ENCODE measurements at regions of chr16 and their contacts with region 1.

Region 1: GRCh38 chr16:69132424-69133252 is at the starts of genes CHTF8 and UTP4:
- DNase-seq: peak; percentile 60 to 82
- H3K4me3 ChIP-seq: peak within 1 kb of the TSS; percentile 100
- H3K27ac ChIP-seq: peak within 1 kb of the TSS; percentile 56
- H3K4me1 ChIP-seq: peaks cover 26% of the 10 kb centered on the region
- H3K27me3 ChIP-seq: no peaks in the 10 kb centered on the region
- CTCF ChIP-seq: no peak
- total RNA-seq, gene CHTF8: 126 and 161 TPM in 2 replicates
- total RNA-seq, gene UTP4: 42.1 and 45.9 TPM in 2 replicates

Region 2: DNA sequence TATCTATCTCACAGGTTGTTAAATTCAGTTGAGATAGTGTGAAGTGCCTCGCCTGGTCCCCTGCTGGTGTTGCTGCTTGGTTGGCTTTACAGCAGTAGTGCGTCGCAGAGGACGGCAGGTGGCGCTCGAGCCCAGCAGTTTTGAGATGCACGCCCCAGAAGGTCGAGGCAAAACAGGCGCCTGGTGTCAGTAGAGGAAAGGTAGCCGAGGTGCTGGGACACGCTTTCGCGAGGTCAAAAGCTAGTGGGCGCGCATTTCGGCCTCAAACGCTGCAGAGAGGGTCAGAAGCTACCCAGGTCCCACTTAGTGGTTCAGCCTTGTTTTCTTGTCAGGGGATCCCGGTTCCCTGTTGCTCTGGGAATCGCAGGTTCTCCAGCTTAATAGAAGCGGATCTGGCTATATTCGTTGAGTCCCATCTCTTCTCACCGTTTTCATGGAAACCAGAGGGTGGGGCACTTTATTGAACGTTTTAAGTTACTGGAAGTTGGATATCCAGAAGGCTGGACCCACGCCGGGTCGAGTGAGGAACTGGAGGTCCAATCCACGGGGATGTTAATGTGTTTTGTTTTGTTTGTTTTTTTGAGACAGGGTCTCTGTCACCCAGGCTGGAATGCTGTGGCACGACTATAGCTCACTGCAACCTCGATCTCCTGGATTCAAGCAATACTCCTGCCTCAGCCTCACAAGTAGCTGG is 603.8 kb before region 1 on chr16:
- CTCF ChIA-PET with region 1: no interaction called
- POLR2A ChIA-PET with region 1: no interaction called
- intact Hi-C with region 1: loop called (anchors 2 kb)
- DNase-seq: peak; percentile 62 to 81
- H3K4me3 ChIP-seq: no peak overlapping the region
- H3K27ac ChIP-seq: no peak overlapping the region
- H3K4me1 ChIP-seq: peaks cover 10% of the 10 kb centered on the region
- H3K27me3 ChIP-seq: no peaks in the 10 kb centered on the region
- CTCF ChIP-seq: peak; percentile 88

Region 3: DNA sequence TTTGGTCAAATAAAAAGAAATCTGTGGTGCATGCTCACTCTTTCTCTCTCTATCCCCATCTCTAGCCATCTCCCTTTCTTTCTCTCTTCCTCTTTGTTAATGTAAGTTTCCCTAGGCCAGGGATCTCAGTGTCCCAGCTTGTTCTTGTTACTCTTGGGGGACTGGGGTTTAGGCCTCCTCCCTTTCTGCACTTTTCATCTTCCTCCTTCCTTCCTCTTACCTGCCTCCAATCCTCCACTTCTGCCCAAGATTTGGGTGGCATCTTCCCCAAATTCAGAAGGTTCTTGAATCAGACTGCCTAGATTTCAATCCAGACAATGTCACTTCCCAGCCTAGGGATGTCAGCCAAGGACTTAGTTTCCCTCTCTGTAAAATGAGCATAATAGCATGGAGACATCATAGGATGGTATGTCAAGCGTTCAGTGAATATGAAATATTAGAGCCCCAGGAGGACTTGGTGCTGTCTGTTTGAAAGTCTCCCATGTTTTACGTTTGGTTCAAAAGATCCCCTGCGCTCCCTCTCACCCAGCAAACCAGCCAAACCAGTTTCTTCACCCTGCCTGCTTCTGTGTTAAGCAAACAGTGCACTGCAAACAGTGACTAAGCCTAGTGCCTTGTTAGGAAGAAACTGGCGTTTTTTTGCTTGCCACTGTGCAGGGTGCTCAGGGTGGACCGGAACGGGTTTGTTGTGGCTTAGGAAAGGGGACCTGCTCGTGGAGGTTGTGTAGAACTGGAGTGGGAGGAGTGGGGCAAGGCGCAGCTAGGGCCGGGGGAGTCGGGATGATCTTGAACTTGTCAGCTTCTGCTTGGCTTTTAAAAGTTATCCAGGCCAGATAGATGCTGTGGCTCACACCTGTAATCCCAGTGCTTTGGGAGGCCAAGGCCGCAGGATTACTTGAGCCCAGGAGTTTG is 388.0 kb before region 1 on chr16:
- CTCF ChIA-PET with region 1: interaction called, 12 read pairs
- POLR2A ChIA-PET with region 1: no interaction called
- intact Hi-C with region 1: no loop called
- DNase-seq: peak; percentile 82 to 98
- H3K4me3 ChIP-seq: peak overlapping the region; percentile 49; the same call in 1 of the 2 replicates
- H3K27ac ChIP-seq: peak overlapping the region; percentile 95
- H3K4me1 ChIP-seq: peaks cover 92% of the 10 kb centered on the region
- H3K27me3 ChIP-seq: no peaks in the 10 kb centered on the region
- CTCF ChIP-seq: no peak

Region 4: GRCh38 chr16:68790130-68790761 is 342.4 kb before region 1 on chr16:
- CTCF ChIA-PET with region 1: no interaction called
- POLR2A ChIA-PET with region 1: interaction called, 11 read pairs
- intact Hi-C with region 1: no loop called
- DNase-seq: peak; percentile 80 to 97
- H3K4me3 ChIP-seq: peak overlapping the region; percentile 3; the same call in 1 of the 2 replicates
- H3K27ac ChIP-seq: peak overlapping the region; percentile 48
- H3K4me1 ChIP-seq: peaks cover 57% of the 10 kb centered on the region
- H3K27me3 ChIP-seq: no peaks in the 10 kb centered on the region
- CTCF ChIP-seq: no peak

Region 5: DNA sequence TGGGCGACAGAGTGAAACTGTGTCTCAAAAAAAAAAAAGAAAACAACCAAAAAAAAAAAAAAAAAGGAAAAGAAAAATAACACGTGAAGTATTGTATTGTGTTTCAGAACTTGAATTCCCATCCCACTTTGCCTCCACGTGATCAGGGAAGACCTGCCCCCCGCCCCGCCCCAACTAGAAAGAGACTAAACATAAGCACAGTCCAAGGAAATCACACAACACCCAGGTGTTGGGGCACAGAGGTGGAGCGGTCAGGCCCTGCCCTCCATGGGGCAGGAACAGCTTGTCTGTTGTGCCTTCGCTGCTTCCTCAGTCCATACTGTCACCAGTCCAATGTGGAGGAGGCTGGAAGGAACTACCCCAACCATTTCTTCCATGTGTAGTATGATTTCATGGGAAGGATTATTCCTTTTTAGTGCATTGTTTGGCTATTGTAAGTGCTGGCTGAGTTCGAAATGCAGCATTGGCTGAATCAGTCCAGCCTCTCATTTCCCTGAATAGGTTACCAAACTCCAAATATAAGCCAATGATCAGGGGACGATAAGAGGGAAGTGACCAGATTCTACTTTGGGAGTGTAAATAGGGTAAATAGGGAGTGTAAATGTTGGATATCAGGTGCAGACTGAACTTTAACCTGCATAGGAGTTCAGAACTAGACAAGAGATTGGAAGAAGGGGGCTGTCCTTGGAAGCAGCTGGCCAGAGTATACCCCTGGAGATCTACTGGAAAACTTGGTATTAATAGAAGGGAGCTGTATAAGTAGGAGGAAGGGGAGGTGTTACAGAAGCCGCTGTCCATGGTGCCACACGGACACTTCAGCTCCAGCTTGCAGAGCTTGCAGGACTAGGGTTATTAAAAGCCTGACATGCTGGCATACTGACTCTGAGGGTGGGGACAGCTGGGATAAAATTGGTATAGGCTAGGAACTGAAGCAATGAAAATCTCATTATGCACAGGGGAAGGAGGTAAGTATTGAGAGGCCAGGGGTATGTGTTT is 238.6 kb before region 1 on chr16:
- CTCF ChIA-PET with region 1: interaction called, 10 read pairs
- POLR2A ChIA-PET with region 1: no interaction called
- intact Hi-C with region 1: no loop called
- DNase-seq: no peak
- H3K4me3 ChIP-seq: no peak overlapping the region
- H3K27ac ChIP-seq: no peak overlapping the region
- H3K4me1 ChIP-seq: no peaks in the 10 kb centered on the region
- H3K27me3 ChIP-seq: no peaks in the 10 kb centered on the region
- CTCF ChIP-seq: no peak

Region 6: GRCh38 chr16:69017036-69017783 is 115.4 kb before region 1 on chr16:
- CTCF ChIA-PET with region 1: no interaction called
- POLR2A ChIA-PET with region 1: no interaction called
- intact Hi-C with region 1: no loop called
- DNase-seq: peak in 1 of 2 experiments; percentile 68
- H3K4me3 ChIP-seq: no peak overlapping the region
- H3K27ac ChIP-seq: peak overlapping the region; percentile 72
- H3K4me1 ChIP-seq: peaks cover 17% of the 10 kb centered on the region
- H3K27me3 ChIP-seq: no peaks in the 10 kb centered on the region
- CTCF ChIP-seq: no peak

Region 7: GRCh38 chr16:69105489-69106361 is 26.9 kb before region 1 on chr16 and contains the start of gene HAS3:
- CTCF ChIA-PET with region 1: no interaction called
- POLR2A ChIA-PET with region 1: interaction called, 18 read pairs
- intact Hi-C with region 1: no loop called
- DNase-seq: peak; percentile 66 to 71
- H3K4me3 ChIP-seq: peak within 1 kb of the TSS; percentile 93
- H3K27ac ChIP-seq: no peak within 1 kb of the TSS
- H3K4me1 ChIP-seq: peaks cover 14% of the 10 kb centered on the region; the same call in 1 of the 2 replicates
- H3K27me3 ChIP-seq: no peaks in the 10 kb centered on the region
- CTCF ChIP-seq: peak; percentile 62; the same call in 1 of the 2 replicates
- total RNA-seq, gene HAS3: 2.5 and 2.7 TPM in 2 replicates